Activated CD4-positive, alpha-beta memory T cell treated with anti-CD3 and anti-CD28 coated beads for 36 hours (primary cell): ENCODE measurements at regions of chr10 and their contacts with region 1.

Region 1: GRCh38 chr10:23438550-23439441 is at the start of gene OTUD1:
- DNase-seq: peak; percentile 94
- H3K4me3 Mint-ChIP-seq: peak within 1 kb of the TSS; percentile 77
- H3K27ac Mint-ChIP-seq: peak within 1 kb of the TSS; percentile 79
- H3K4me1 Mint-ChIP-seq: peaks cover 30% of the 10 kb centered on the region
- H3K27me3 Mint-ChIP-seq: no peaks in the 10 kb centered on the region
- total RNA-seq, gene OTUD1: 11.6 to 12.0 TPM

Region 2: GRCh38 chr10:22228943-22229801 is 1209.6 kb before region 1 on chr10:
- CTCF ChIA-PET with region 1: no interaction called
- POLR2A ChIA-PET with region 1: no interaction called
- intact Hi-C with region 1: loop called (anchors 10 kb)
- DNase-seq: peak; percentile 90
- H3K4me3 Mint-ChIP-seq: peak overlapping the region; percentile 77
- H3K27ac Mint-ChIP-seq: peak overlapping the region; percentile 96
- H3K4me1 Mint-ChIP-seq: peaks cover 16% of the 10 kb centered on the region
- H3K27me3 Mint-ChIP-seq: peaks cover 4% of the 10 kb centered on the region

Region 3: DNA sequence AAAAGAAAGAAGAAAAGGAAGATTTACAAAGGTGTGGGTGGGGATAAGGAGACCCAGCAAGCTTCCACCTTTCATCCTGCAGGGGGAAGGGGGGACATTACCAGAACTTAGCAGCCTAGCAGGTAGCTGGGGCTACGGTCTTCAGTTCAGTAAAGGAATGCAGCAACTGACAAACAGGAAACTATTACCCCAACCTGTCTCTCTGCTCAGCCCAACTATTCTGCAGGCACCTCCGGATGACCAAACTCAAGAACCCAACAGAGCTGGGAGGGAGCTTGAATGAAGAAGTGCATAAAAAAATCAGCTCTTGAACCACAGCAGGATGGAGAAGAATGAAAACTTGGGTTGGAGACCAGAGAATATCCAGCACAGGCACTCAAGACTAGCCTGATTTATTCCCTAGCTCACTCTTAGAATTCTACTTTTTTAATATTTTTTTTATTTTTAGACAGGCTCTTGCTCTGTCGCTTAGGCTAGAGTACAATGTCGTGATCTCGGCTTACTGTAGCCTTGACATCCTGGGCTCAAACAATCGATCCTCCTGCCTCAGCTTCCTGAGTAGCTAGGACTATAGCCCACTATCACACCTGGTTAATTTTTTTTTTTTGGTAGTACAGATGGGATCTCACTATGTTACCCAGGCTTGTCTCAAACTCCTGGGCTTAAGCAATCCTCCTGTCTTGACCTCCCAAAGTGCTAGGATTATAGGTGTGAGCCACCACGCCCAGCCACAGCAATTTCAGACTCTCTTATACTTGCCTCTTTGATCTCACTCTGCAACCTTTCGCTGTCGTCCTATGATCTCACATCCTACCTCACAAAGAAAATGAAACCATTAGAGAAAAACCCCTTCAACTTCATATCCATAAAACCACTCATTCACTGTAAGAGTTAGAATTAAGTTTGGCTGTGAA is 75.7 kb before region 1 on chr10:
- CTCF ChIA-PET with region 1: interaction called, 3 read pairs
- POLR2A ChIA-PET with region 1: no interaction called
- intact Hi-C with region 1: loop called (anchors 1 kb)
- DNase-seq: peak; percentile 68
- H3K4me3 Mint-ChIP-seq: peak overlapping the region; percentile 63
- H3K27ac Mint-ChIP-seq: peak overlapping the region; percentile 89
- H3K4me1 Mint-ChIP-seq: peaks cover 61% of the 10 kb centered on the region
- H3K27me3 Mint-ChIP-seq: peaks cover 3% of the 10 kb centered on the region

Region 4: DNA sequence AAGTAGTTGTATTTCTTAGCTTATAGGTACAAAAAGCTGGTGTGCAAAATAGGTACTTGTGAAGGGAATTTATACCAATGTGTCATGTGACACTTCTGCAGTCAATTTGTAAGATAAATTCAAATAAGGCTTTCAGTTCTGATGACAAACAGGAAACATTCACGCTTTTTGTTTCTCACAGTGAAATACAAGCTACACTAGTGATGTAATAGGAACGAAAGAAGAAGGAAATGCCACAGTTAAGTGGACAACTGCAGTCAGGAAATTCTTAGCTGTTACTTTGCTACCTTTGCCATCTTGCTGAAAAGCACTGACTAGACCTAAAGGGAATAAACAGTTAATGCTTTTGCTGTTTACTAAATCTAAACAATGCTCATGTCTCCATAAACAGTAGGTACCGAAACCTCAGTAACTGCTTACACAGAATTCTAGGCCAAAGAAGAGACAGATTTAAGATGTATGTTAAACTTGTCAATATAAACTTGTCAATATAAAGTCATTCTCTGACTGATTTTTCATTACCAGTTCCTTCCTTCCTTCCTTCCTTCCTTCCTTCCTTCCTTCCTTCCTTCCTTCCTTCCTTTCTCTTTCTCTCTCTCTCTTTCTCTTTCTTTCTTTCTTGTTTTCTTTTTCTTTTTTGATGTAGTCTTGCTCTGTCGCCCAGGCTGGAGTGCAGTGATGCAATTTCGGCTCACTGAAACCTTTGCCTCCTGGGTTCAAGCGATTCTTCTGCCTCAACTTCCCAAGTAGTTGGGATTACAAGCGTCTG is 10.2 kb after region 1 on chr10:
- CTCF ChIA-PET with region 1: interaction called, 4 read pairs
- POLR2A ChIA-PET with region 1: interaction called, 6 read pairs
- intact Hi-C with region 1: loop called (anchors 1 kb)
- DNase-seq: no peak
- H3K4me3 Mint-ChIP-seq: no peak overlapping the region
- H3K27ac Mint-ChIP-seq: peak overlapping the region; percentile 82
- H3K4me1 Mint-ChIP-seq: peaks cover 34% of the 10 kb centered on the region
- H3K27me3 Mint-ChIP-seq: no peaks in the 10 kb centered on the region

Region 5: GRCh38 chr10:24465891-24466818 is 1027.4 kb after region 1 on chr10:
- CTCF ChIA-PET with region 1: no interaction called
- POLR2A ChIA-PET with region 1: interaction called, 3 read pairs
- intact Hi-C with region 1: loop called (anchors 10 kb)
- DNase-seq: peak; percentile 84
- H3K4me3 Mint-ChIP-seq: peak overlapping the region; percentile 44
- H3K27ac Mint-ChIP-seq: peak overlapping the region; percentile 53
- H3K4me1 Mint-ChIP-seq: peaks cover 42% of the 10 kb centered on the region
- H3K27me3 Mint-ChIP-seq: peaks cover 21% of the 10 kb centered on the region

Region 6: DNA sequence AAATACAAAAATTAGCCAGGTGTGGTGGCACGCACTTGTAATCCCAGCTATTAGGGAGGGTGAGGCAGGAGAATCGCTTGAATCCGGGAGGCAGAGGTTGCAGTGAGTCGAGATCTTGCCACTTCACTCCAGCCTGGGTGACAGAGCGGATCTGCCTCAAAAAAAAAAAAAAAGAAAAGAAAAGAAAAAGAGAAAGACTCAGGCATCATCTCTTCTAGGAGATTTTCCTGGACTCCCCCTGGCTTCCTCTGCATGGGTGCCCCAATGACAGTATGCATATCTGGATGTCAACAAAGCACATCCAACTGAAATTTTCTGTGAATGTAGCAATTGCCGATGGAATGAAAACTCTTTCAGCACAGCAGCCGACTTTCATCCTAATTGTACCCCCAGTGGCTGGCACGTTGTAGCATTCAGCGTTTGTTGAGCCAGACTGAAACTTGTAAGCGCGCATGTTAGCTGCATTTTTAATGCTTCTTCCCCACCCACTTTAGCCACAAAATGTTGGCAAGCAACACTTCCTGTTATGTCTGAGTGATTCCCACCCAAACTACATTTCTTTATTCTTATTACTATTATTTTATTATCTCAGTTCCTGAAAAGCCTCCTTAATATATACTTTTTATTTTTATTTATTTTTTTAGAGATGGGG is 1443.4 kb after region 1 on chr10:
- CTCF ChIA-PET with region 1: no interaction called
- POLR2A ChIA-PET with region 1: no interaction called
- intact Hi-C with region 1: loop called (anchors 10 kb)
- DNase-seq: peak; percentile 66
- H3K4me3 Mint-ChIP-seq: peak overlapping the region; percentile 57
- H3K27ac Mint-ChIP-seq: peak overlapping the region; percentile 62
- H3K4me1 Mint-ChIP-seq: peaks cover 30% of the 10 kb centered on the region
- H3K27me3 Mint-ChIP-seq: no peaks in the 10 kb centered on the region